ENCODE measurements at regions of chr12 and their contacts with region 1.

Region 1: GRCh38 chr12:124527861-124528561 is 39.4 kb downstream of the NCOR2 start:
- DNase-seq: no peak
- H3K4me3 ChIP-seq: no peak overlapping the region
- H3K27ac ChIP-seq: no peak overlapping the region
- H3K4me1 ChIP-seq: peaks cover 0 to 30% (median 19%) of the 10 kb centered on the region in 4 experiments
- H3K27me3 ChIP-seq: no peaks in the 10 kb centered on the region

Region 2: DNA sequence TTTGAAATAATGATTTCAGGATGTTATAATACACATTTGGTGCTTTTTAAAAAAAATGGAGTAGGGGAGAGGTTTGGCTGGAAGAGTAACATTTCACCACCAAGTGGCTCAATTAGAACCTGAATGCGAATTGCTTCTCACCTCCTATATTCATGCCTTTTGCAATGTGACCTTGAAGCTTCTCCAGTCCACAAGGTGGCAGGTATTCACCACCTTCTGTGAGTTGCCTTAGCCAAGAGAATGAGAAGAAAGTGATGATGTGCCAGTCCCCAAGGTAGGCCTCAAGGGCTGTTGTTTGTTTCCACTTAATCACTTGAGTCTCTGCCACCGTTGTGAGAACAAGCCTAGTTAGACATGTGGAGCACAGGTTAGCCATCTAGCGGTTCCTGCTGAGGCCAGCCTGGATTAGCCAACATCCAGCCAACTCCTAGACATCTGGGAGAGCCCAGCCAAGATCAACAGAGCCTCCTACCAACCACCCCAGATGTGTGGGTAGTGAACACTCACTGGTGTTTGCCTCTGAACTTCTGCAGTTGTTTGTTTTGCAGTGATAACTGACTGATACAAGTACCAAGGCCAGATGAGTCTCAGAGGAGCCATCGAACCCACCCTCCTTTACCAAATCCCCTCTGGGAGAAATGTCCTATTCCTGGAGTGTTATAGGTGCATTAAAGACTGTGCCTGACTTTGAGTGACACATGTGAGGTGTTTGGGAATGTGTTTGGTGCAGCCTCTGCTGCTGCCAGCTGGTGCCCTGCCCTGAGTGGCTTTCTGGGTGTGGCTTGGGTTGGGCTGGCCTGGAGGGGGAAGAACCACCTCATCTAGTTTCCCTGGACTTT is 365.6 kb before region 1 on chr12:
- CTCF ChIA-PET with region 1: no interaction called
- POLR2A ChIA-PET with region 1: no interaction called
- DNase-seq: no peak
- H3K4me3 ChIP-seq: no peak overlapping the region
- H3K27ac ChIP-seq: no peak overlapping the region
- H3K4me1 ChIP-seq: no peaks in the 10 kb centered on the region
- H3K27me3 ChIP-seq: peaks cover 0 to 2% (median 0%) of the 10 kb centered on the region in 5 experiments

Region 3: DNA sequence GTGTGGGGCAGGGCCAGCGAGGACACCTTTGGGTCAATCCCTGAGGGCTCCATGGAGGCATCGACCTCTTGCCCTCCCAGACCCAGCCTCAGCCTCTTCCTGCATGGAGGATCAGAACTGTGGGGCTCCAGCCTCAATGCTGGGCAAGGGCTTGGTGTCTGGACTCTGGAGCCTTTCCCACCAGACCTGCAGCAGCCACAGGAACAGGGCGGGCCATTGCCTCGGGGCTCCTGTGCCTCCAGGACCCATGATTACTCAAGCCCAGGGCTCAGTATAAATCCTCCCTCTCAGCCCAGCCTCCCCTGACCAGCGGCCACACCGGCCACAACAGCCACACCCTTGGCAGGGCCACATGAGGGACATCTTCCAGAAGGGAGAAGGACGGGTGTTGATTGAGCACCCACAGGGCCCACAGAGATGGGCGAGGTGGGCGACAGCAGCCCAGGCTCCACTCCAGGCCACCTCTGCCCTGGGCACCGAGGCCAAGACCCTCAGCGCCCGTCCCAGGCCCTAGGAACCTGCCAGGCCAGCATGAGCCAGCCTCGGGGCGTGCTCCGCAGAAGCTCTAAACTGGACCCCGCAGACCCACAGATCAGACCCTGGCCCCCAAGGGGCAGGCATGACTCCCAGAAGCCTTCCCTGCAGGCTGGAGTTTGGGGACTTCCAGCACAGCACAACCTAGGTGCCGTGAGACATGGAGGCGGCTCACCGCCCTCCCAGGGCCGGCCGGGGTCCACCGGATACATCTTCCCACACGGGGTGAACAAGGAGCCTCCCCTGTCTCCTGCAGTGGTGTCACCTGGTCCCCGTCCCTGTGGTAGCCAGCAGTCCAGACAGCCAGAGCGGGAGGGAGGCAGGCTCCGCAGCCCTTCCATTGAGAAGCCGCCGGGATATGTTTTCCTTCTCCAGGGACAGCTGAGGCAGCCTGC is 14.3 kb after region 1 on chr12:
- CTCF ChIA-PET with region 1: interaction called, 10 read pairs
- POLR2A ChIA-PET with region 1: interaction called, 3 read pairs
- DNase-seq: no peak
- H3K4me3 ChIP-seq: no peak overlapping the region
- H3K27ac ChIP-seq: peak overlapping the region in 1 of 2 experiments; percentile 64
- H3K4me1 ChIP-seq: peaks cover 2 to 77% (median 74%) of the 10 kb centered on the region in 4 experiments
- H3K27me3 ChIP-seq: no peaks in the 10 kb centered on the region

Measured in common myeloid progenitor, CD34-positive (primary cell).